Heart left ventricle (tissue), 16 donors: ENCODE measurements at regions of chr14 and their contacts with region 1.

Region 1: DNA sequence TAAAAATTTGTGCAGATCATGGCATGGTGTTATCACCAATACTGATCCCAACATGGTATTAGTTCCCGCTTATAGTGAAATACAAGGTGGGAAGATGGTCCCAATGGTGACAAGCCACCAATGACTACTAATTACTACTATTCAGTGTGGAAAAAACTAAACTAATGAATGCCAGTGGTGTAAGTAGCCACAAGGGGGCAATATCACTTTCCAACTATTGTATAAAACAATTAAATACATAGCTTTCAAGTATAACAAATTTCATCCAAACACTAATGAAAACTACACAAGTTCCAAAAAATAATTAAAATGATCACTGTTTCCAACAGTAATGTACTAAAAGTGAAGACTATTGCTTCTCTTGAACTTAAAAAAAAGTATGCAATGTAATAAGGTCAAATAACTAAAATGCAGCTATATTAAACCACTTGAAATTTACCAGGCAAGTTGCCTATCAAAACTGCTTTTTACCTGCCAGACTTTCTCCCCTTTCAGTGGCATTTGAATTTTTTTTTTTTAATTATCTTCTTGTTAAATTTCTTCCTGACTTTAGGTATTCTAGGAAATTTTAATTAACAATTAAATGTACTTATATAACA is 58.0 kb downstream of the PAPLN start:
- DNase-seq: no peak
- ATAC-seq: no peak
- H3K4me3 ChIP-seq: no peak overlapping the region
- H3K27ac ChIP-seq: no peak overlapping the region
- H3K4me1 ChIP-seq: peaks cover 0 to 7% (median 0%) of the 10 kb centered on the region in 12 donors
- H3K27me3 ChIP-seq: no peaks in the 10 kb centered on the region
- CTCF ChIP-seq: peak; percentile 63 to 87 (median 78)
- POLR2A ChIP-seq: no peak

Region 2: GRCh38 chr14:73344319-73344718 is 49.0 kb after region 1 on chr14:
- intact Hi-C with region 1: loop called in 1 of 10 experiments (anchors 10 kb)
- DNase-seq: no peak
- ATAC-seq: peak in 2 of 4 donors; percentile 10 to 59
- H3K4me3 ChIP-seq: no peak overlapping the region
- H3K27ac ChIP-seq: peak overlapping the region in 2 of 12 donors; percentile 13 to 41
- H3K4me1 ChIP-seq: peaks cover 0 to 22% (median 4%) of the 10 kb centered on the region in 12 donors
- H3K27me3 ChIP-seq: no peaks in the 10 kb centered on the region
- CTCF ChIP-seq: no peak
- POLR2A ChIP-seq: no peak

Region 3: GRCh38 chr14:73463411-73463810 is 168.1 kb after region 1 on chr14:
- intact Hi-C with region 1: loop called in 2 of 10 experiments (anchors 2 to 5 kb)
- DNase-seq: peak in 3 of 5 donors; percentile 23 to 61 (median 27)
- ATAC-seq: peak in 2 of 4 donors; percentile 14 to 31
- H3K4me3 ChIP-seq: peak overlapping the region in 1 of 12 donors; percentile 30
- H3K27ac ChIP-seq: peak overlapping the region in 11 of 12 donors; percentile 48 to 87 (median 64)
- H3K4me1 ChIP-seq: peaks cover 12 to 90% (median 47%) of the 10 kb centered on the region in 12 donors
- H3K27me3 ChIP-seq: no peaks in the 10 kb centered on the region
- CTCF ChIP-seq: no peak
- POLR2A ChIP-seq: no peak

Region 4: DNA sequence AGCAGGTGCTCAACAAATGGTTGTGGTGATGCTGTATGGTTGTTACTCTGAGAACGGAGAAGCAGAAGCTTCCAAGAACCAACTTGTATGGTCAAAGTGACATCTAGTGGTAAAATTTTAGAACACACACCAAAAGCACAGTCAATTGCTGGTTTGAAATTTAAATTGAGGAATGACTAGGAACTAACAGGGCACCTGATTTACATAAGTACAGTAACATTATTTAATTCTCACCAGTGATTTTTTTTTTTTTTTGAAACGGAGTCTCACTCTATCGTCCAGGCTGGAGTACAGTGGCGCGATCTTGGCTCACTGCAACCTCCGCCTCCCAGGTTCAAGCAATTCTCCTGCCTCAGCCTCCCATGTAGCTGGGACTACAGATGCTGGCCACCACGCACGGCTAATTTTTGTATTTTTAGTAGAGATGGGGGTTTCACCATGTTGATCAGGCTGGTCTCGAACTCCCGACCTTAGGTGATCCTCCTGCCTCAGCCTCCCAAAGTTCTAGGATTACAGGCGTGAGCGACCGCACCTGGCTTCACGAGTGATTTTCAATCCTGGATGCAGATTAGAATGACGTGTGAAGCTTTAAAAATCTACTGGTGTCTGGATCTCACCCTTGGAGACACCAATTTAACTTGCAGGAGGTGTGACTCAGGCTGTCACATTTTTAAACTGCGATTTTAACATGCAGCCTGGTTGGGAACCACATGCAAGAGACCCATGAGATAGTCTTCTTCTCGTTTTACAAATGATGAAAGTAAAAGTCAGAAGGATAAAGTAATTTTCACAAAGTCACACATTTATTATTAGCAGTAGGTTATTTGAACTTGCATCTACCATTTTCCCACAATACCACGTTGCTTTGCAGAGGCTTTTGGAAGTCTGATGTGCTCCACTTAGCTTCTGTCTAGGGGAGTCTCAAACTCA is 177.2 kb after region 1 on chr14:
- intact Hi-C with region 1: loop called (anchors 1 to 5 kb)
- DNase-seq: no peak
- ATAC-seq: peak in 3 of 4 donors; percentile 79 to 88 (median 80)
- H3K4me3 ChIP-seq: no peak overlapping the region
- H3K27ac ChIP-seq: no peak overlapping the region
- H3K4me1 ChIP-seq: peaks cover 0 to 8% (median 0%) of the 10 kb centered on the region in 12 donors
- H3K27me3 ChIP-seq: no peaks in the 10 kb centered on the region
- CTCF ChIP-seq: peak; percentile 59 to 86 (median 74)
- POLR2A ChIP-seq: no peak